Testis (tissue), 5 donors: ENCODE measurements at regions of chr7 and their contacts with region 1.

Region 1: GRCh38 chr7:23570592-23571200 is 26.5 kb upstream of the CCDC126 start:
- DNase-seq: peak; percentile 85
- H3K4me3 ChIP-seq: no peak overlapping the region
- H3K27ac ChIP-seq: no peak overlapping the region
- H3K4me1 ChIP-seq: no peaks in the 10 kb centered on the region
- H3K27me3 ChIP-seq: no peaks in the 10 kb centered on the region
- CTCF ChIP-seq: peak; percentile 48 to 71 (median 58)
- POLR2A ChIP-seq: no peak

Region 2: GRCh38 chr7:23426876-23427275 is 143.8 kb before region 1 on chr7:
- intact Hi-C with region 1: no loop called
- DNase-seq: no peak
- H3K4me3 ChIP-seq: no peak overlapping the region
- H3K27ac ChIP-seq: no peak overlapping the region
- H3K4me1 ChIP-seq: no peaks in the 10 kb centered on the region
- H3K27me3 ChIP-seq: no peaks in the 10 kb centered on the region
- CTCF ChIP-seq: no peak
- POLR2A ChIP-seq: no peak

Region 3: DNA sequence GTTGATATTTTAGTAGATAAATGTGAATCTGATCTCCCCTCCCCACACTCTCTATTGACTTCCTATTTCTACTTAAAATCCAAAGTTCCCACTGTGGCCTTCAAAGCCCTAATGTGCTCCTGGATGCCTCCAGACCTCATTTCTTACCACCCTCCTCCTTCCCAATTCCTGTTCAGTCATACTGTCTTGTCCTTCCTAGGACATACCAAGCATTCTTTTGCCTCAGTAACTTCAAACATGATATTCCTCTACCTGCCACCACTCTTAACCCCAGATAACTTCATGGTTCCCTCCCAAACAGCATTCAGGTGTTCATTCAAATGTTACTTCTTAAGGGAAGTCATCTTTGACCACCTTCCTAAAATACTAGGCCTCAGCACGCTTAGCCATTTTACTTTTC is 75.1 kb after region 1 on chr7:
- intact Hi-C with region 1: no loop called
- DNase-seq: no peak
- H3K4me3 ChIP-seq: no peak overlapping the region
- H3K27ac ChIP-seq: no peak overlapping the region
- H3K4me1 ChIP-seq: no peaks in the 10 kb centered on the region
- H3K27me3 ChIP-seq: no peaks in the 10 kb centered on the region
- CTCF ChIP-seq: no peak
- POLR2A ChIP-seq: no peak

Region 4: DNA sequence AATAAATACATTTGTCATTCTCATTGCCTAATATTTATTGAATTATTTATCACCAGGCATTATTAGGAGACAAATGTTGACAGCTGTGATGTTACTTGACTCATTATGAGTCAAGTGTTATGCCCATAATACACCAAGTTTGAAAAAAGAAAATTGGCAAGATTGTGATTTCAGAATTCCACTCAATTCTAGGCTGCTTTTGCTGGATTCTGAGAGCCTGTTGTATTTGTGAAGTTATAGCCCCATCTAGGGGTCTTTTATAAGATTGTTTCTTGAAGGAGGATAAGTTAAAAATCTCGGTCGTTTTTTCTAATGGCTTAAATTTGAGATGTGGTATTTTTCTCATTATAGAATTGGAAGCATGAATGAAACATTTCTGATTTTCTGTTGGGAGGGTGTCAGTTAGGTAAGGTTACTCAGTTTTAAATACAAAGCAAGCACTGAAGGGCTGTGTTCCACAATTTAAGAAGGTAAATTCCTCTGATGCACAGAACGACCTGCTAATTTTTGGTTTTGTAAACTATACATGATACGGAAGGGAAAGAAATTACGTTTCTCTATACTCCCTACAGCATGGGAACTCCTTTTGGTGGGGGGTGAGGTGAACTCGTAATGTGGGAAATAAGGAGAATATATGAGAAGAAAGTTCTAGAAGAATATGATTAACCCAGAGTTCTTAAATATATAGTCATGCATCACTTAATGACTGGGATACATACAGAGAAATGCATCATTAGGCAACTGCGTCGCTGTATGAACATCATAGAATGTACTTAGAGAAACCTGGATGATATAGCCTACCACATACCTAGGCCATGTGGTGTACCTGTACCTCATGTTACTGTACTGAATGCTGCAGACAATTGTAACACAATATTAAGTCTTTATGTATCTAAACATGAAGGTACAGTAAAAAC is 141.9 kb after region 1 on chr7:
- intact Hi-C with region 1: loop called (anchors 10 kb)
- DNase-seq: no peak
- H3K4me3 ChIP-seq: no peak overlapping the region
- H3K27ac ChIP-seq: no peak overlapping the region
- H3K4me1 ChIP-seq: no peaks in the 10 kb centered on the region
- H3K27me3 ChIP-seq: no peaks in the 10 kb centered on the region
- CTCF ChIP-seq: peak; percentile 49 to 56 (median 50)
- POLR2A ChIP-seq: no peak